Keratinocyte (primary cell): ENCODE measurements at regions of chr13 and their contacts with region 1.

Region 1: GRCh38 chr13:27953676-27954405 is 15.3 kb downstream of the CDX2 start:
- DNase-seq: no peak
- H3K4me3 ChIP-seq: peak overlapping the region; percentile 41 to 68 (median 57)
- H3K27ac ChIP-seq: no peak overlapping the region
- H3K4me1 ChIP-seq: no peaks in the 10 kb centered on the region
- H3K27me3 ChIP-seq: peaks cover 35% of the 10 kb centered on the region
- CTCF ChIP-seq: peak; percentile 63 to 91 (median 90)

Region 2: GRCh38 chr13:27826379-27827353 is 127.2 kb before region 1 on chr13:
- dilution Hi-C with region 1: loop called (anchors 25 kb)
- DNase-seq: peak; percentile 48
- H3K4me3 ChIP-seq: peak overlapping the region; percentile 11 to 59 (median 43)
- H3K27ac ChIP-seq: no peak overlapping the region
- H3K4me1 ChIP-seq: no peaks in the 10 kb centered on the region
- H3K27me3 ChIP-seq: peaks cover 38% of the 10 kb centered on the region
- CTCF ChIP-seq: peak; percentile 87 to 90 (median 89)